BJ (cell line): ENCODE measurements at regions of chr3 and their contacts with region 1.

Region 1: GRCh38 chr3:195271116-195271858 is at the start of gene XXYLT1:
- DNase-seq: peak; percentile 30
- H3K4me3 ChIP-seq: peak within 1 kb of the TSS; percentile 91
- H3K27me3 ChIP-seq: no peaks in the 10 kb centered on the region
- CTCF ChIP-seq: peak; percentile 81
- polyA plus RNA-seq, gene XXYLT1: 24.4 and 33.5 TPM in 2 replicates

Region 2: GRCh38 chr3:194671900-194672808 is 599.1 kb before region 1 on chr3 and contains the start of gene LSG1:
- CTCF ChIA-PET with region 1: interaction called, 46 read pairs
- POLR2A ChIA-PET with region 1: no interaction called
- DNase-seq: peak; percentile 62
- H3K4me3 ChIP-seq: peak within 1 kb of the TSS; percentile 85
- H3K27me3 ChIP-seq: peaks cover 6% of the 10 kb centered on the region
- CTCF ChIP-seq: no peak
- polyA plus RNA-seq, gene LSG1: 23.9 and 35.4 TPM in 2 replicates

Region 3: DNA sequence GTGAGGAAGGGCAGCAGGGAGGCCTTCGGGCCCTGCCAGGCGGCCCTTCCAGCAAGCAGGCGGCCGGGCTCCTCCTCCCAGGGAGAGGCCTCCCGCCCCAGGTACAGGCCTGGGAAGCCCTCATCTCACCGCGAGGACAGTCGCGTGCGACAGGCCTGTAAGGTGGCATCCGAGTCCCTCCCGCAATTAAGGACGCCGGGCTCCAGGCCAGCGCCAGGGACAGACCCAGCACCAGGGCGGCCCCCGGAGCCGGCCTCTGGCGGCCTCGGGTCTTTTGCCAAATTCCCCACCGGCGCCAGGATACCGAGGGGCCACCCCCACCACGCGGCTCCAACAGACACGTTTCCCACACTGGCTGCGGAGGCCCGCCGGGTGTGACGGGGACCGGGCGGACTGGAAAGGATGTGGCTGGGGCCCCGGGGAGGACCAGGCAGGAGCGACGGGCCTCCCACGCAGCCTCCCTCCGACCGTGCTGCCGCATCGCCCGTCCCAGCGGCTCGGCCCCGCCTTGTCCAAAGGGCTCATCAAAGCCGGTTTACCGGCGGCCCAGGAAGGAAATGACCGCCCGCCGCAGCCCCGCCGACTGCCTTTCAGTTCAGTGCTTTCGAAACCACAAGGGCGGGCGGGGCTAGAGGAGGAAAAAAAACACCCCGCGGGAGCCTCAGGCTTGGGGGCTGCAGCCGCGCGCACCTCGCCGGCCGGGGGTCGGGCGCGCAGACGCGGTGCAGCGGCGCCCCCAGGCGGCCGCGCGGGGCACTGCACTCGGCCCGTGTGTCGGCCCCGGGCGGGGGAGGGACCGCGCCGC is 11.6 kb before region 1 on chr3:
- CTCF ChIA-PET with region 1: interaction called, 35 read pairs
- POLR2A ChIA-PET with region 1: no interaction called
- DNase-seq: peak; percentile 62
- H3K4me3 ChIP-seq: peak overlapping the region; percentile 54
- H3K27me3 ChIP-seq: no peaks in the 10 kb centered on the region
- CTCF ChIP-seq: no peak

Region 4: DNA sequence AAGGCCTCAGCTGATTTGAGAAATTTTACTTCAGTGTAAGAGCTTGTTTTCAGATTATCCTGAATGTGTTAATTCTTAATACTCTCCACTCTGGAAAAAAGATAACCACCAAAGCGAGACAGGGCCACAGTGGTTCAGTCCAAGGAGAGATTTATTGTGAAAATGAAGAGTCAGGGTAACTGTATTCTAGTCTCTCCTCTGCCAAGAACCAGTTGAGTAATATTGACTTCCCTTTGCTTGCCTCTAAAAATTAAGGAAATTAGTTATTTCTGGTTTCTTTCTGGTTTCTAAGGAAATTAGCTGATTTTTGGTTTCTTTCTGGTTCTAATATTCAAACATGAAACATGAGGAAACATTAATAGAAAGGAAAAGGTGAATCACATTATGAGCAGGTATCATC is 236.9 kb after region 1 on chr3:
- CTCF ChIA-PET with region 1: interaction called, 15 read pairs
- POLR2A ChIA-PET with region 1: no interaction called
- DNase-seq: no peak
- H3K4me3 ChIP-seq: no peak overlapping the region
- H3K27me3 ChIP-seq: no peaks in the 10 kb centered on the region
- CTCF ChIP-seq: no peak

Region 5: DNA sequence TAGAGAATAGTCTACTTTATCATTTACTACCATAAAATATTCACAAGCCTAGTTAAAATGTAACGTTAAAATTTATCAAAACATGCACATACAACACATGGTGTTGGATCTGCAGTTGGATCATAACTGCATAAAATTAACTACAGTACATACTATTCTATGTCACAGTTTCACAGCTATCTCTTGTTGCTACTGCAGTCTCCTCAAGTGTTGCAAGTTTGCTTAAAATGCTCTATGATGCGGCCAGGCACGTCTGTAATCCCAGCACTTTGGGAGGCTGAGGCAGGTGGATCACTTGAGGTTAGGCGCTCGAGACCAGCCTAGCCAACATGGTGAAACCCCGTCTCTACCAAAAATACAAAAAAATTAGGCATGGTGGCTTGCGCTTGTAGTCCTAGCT is 261.5 kb after region 1 on chr3:
- CTCF ChIA-PET with region 1: interaction called, 160 read pairs
- POLR2A ChIA-PET with region 1: no interaction called
- DNase-seq: no peak
- H3K4me3 ChIP-seq: no peak overlapping the region
- H3K27me3 ChIP-seq: no peaks in the 10 kb centered on the region
- CTCF ChIP-seq: no peak